ENCODE measurements at regions of chr10 and their contacts with region 1.

Region 1: DNA sequence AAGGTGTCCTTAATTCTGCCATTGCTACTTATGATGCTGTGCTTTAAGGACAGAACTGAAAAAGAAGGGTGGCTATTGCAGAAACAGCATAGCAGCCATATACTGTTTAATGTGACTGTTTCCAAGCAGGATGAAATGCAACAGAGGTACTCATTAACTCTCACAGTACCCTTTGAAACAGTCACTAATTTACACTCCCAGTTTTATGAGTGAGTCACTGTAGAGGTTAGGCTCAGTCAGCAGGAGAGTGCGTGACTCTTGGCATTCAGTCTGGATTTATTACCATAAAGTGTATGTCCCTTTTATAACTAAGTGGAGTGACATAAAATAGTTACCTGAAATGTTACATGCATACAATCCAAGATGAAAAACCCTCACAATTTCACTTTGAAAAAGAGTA is 27.7 kb downstream of the ALDH18A1 start:
- DNase-seq: no peak
- ATAC-seq: no peak
- H3K4me3 ChIP-seq: no peak overlapping the region
- H3K27ac ChIP-seq: no peak overlapping the region
- H3K4me1 ChIP-seq: no peaks in the 10 kb centered on the region
- H3K27me3 ChIP-seq: no peaks in the 10 kb centered on the region
- CTCF ChIP-seq: no peak
- POLR2A ChIP-seq: no peak
- RAD21 ChIP-seq: no peak

Region 2: GRCh38 chr10:95675403-95676112 is 46.8 kb after region 1 on chr10:
- CTCF ChIA-PET with region 1: no interaction called
- POLR2A ChIA-PET with region 1: interaction called, 13 read pairs
- dilution Hi-C with region 1: no loop called
- in situ Hi-C with region 1: no loop called
- intact Hi-C with region 1: loop called (anchors 10 kb)
- DNase-seq: no peak
- ATAC-seq: no peak
- H3K4me3 ChIP-seq: no peak overlapping the region
- H3K27ac ChIP-seq: no peak overlapping the region
- H3K4me1 ChIP-seq: no peaks in the 10 kb centered on the region
- H3K27me3 ChIP-seq: no peaks in the 10 kb centered on the region
- CTCF ChIP-seq: no peak
- POLR2A ChIP-seq: no peak
- RAD21 ChIP-seq: no peak